AG04450 (cell line): ENCODE measurements at regions of chr5 and their contacts with region 1.

Region 1: GRCh38 chr5:43233946-43234345 is 41.9 kb downstream of the NIM1K start:
- DNase-seq: no peak
- H3K4me3 ChIP-seq: no peak overlapping the region
- H3K27ac ChIP-seq: no peak overlapping the region
- H3K27me3 ChIP-seq: peaks cover 3% of the 10 kb centered on the region
- CTCF ChIP-seq: no peak

Region 2: GRCh38 chr5:44652674-44653073 is 1418.7 kb after region 1 on chr5:
- CTCF ChIA-PET with region 1: no interaction called
- POLR2A ChIA-PET with region 1: interaction called, 12 read pairs
- DNase-seq: no peak
- H3K4me3 ChIP-seq: no peak overlapping the region
- H3K27ac ChIP-seq: no peak overlapping the region
- H3K27me3 ChIP-seq: no peaks in the 10 kb centered on the region
- CTCF ChIP-seq: no peak